ENCODE measurements at regions of chr6 and their contacts with region 1.

Region 1: GRCh38 chr6:42547407-42548329 is 16.2 kb upstream of the UBR2 start:
- DNase-seq: peak; percentile 45
- H3K4me3 ChIP-seq: peak overlapping the region; percentile 53
- H3K27ac ChIP-seq: no peak overlapping the region
- H3K27me3 ChIP-seq: no peaks in the 10 kb centered on the region
- CTCF ChIP-seq: peak; percentile 100

Region 2: DNA sequence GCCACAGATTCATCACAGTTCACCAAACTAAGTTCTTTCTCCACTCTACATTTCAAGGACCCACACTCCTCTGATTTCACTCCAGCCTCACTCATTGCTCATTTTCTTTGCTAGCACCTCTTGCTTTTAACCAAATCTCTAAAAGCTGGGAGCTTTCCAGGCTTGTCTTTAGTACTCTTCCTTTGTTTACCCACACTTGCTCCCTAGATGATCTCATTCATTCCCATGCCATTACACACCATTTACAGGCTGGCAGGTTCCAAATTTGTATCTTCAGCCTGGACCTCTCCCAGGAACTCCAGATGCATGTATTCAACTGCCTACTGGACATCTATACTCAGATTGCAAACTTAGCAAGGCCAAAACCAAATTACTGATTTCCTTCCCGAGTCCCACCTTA is 347.6 kb before region 1 on chr6:
- CTCF ChIA-PET with region 1: interaction called, 23 read pairs
- POLR2A ChIA-PET with region 1: no interaction called
- DNase-seq: peak; percentile 96
- H3K4me3 ChIP-seq: no peak overlapping the region
- H3K27ac ChIP-seq: peak overlapping the region; percentile 81
- H3K27me3 ChIP-seq: no peaks in the 10 kb centered on the region
- CTCF ChIP-seq: no peak

Region 3: GRCh38 chr6:42251911-42252637 is 295.6 kb before region 1 on chr6:
- CTCF ChIA-PET with region 1: interaction called, 13 read pairs
- POLR2A ChIA-PET with region 1: no interaction called
- DNase-seq: no peak
- H3K4me3 ChIP-seq: no peak overlapping the region
- H3K27ac ChIP-seq: peak overlapping the region; percentile 39
- H3K27me3 ChIP-seq: no peaks in the 10 kb centered on the region
- CTCF ChIP-seq: no peak

Region 4: GRCh38 chr6:42315991-42316378 is 231.7 kb before region 1 on chr6:
- CTCF ChIA-PET with region 1: interaction called, 23 read pairs
- POLR2A ChIA-PET with region 1: no interaction called
- DNase-seq: peak; percentile 86
- H3K4me3 ChIP-seq: no peak overlapping the region
- H3K27ac ChIP-seq: peak overlapping the region; percentile 99
- H3K27me3 ChIP-seq: no peaks in the 10 kb centered on the region
- CTCF ChIP-seq: no peak

Region 5: GRCh38 chr6:42390228-42390934 is 157.3 kb before region 1 on chr6:
- CTCF ChIA-PET with region 1: interaction called, 13 read pairs
- POLR2A ChIA-PET with region 1: no interaction called
- DNase-seq: no peak
- H3K4me3 ChIP-seq: no peak overlapping the region
- H3K27ac ChIP-seq: no peak overlapping the region
- H3K27me3 ChIP-seq: no peaks in the 10 kb centered on the region
- CTCF ChIP-seq: no peak

Region 6: GRCh38 chr6:42453031-42453653 is 94.5 kb before region 1 on chr6:
- CTCF ChIA-PET with region 1: interaction called, 20 read pairs
- POLR2A ChIA-PET with region 1: interaction called, 19 read pairs
- DNase-seq: peak; percentile 78
- H3K4me3 ChIP-seq: peak overlapping the region; percentile 88
- H3K27ac ChIP-seq: peak overlapping the region; percentile 86
- H3K27me3 ChIP-seq: no peaks in the 10 kb centered on the region
- CTCF ChIP-seq: no peak

Region 7: DNA sequence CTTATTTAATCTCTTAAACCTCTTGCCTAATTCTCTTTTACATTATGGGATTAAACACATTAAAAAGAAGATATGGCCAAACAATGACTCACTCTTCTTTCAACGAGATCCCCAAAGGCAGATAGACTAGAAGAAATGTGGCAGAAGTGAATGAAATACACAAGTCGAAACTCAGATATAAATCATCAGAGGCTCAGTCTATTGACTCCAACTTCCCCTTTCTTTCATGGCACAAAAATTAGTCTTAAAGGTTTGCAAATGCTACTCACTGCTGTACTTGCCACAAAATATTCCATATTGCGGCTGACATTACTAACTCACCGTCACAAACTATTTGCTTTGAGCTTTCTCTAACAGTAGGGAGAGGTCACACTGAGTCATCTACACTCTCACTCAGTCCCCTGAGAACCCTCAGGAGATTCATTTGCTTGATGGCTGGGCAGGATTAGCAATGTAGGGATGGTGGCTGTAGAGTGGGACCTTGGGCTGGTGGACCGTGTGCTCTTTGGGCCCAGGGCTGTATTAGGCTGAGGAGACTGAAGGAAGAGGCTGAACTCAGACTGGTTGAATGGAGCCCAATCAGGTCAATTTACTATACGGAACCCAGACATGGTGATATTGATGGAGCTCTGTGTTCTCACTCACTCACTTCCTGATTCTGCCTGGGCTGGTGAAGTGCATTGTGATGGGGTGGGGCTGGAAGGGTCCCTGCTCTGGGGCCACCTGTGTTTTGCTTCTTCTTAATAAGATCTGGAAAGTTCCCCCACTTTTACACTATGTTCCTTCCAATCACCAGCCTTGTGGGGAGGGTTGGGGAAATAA is 26.7 kb before region 1 on chr6:
- CTCF ChIA-PET with region 1: interaction called, 18 read pairs
- POLR2A ChIA-PET with region 1: no interaction called
- DNase-seq: no peak
- H3K4me3 ChIP-seq: no peak overlapping the region
- H3K27ac ChIP-seq: no peak overlapping the region
- H3K27me3 ChIP-seq: no peaks in the 10 kb centered on the region
- CTCF ChIP-seq: no peak

Region 8: DNA sequence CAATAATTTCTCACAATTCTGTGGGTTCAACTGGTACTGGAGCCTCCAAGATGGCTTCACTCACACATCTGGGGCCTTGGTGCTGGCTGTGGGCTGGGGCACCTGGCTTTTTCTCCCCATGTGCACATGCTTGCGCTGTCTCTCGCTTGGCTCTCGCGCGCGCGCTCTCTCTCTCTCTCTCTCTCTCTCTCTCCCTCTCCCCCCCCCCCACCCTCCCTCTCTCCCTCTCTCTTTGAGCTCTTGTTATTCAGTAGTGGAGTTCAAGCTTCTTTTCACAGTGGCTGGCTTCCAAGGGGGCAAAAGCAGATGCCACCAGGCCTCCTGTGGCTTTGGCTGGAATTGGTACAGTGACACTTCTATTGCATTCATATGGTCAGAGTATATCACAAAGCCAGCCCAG is 209.1 kb after region 1 on chr6:
- CTCF ChIA-PET with region 1: no interaction called
- POLR2A ChIA-PET with region 1: no interaction called
- DNase-seq: no peak
- H3K4me3 ChIP-seq: no peak overlapping the region
- H3K27ac ChIP-seq: no peak overlapping the region
- H3K27me3 ChIP-seq: no peaks in the 10 kb centered on the region
- CTCF ChIP-seq: no peak